Activated CD4-positive, alpha-beta T cell treated with anti-CD3 and anti-CD28 coated beads, Interleukin-2, amount 10 ng/mL, durations not matched to agents 7 days and 5 days (primary cell): ENCODE measurements at regions of chr2 and their contacts with region 1.

Region 1: DNA sequence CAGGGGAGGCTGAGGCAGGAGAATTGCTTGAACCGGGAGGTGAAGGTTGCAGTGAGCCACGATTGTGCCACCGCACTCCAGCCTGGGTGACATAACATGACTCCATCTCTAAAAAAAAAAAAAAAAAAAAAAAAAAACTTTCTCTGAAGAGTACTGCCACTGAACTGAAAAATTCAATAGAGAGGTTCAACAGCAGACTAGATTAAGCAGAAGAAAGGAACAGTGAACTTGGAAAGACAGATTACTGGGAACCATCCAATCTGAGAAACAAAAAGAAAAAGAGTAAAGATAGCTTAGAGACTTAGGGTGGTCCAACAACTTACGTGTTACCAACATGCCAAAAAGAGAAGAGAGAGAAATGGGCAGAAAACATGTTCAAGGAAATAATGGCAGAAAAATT is 138.8 kb downstream of the EML6 start:
- DNase-seq: no peak
- H3K4me3 Mint-ChIP-seq: no peak overlapping the region
- H3K27ac Mint-ChIP-seq: no peak overlapping the region
- H3K4me1 Mint-ChIP-seq: peaks cover 7% of the 10 kb centered on the region
- H3K27me3 Mint-ChIP-seq: no peaks in the 10 kb centered on the region

Region 2: DNA sequence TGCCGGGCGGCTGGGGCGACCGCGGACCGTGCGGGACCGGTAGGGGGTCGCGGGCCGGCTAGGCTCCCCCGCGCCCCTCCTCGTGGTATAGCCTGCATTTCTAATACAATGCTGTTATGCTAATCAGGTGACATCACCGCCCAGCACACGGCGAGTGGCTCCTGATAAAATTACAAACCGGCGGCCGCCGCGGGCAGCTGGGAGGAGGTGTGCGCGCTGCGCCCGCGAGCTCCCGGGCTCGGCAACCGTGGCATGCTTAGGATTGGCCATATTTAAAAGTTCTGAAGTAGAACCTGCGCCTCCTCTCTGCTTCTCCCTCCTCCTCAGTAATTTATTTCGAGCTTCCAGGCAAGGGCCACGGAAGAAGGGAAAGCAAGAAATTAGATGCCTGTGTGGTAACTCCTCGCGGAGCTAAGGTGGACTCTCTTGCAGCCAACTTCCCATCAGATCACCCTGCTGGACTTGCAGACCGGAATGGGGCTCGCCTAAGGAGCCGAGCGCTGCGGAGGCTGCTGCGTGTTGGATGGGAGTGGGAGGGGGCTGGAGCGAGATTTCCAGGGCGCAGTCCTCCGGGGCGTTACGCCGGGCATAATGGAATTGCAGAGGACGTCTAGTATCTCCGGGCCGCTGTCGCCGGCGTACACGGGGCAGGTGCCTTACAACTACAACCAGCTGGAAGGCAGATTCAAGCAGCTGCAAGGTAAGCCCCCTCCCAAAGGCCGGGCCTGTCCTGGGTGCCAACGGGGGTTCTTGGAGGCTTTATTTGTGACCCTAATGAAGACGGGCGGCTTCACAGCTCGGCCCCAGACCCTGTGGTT is 303.8 kb before region 1 on chr2:
- CTCF ChIA-PET with region 1: no interaction called
- POLR2A ChIA-PET with region 1: no interaction called
- DNase-seq: peak; percentile 77
- H3K4me3 Mint-ChIP-seq: peak overlapping the region; percentile 98
- H3K27ac Mint-ChIP-seq: peak overlapping the region; percentile 92
- H3K4me1 Mint-ChIP-seq: peaks cover 40% of the 10 kb centered on the region
- H3K27me3 Mint-ChIP-seq: peaks cover 2% of the 10 kb centered on the region

Region 3: GRCh38 chr2:54803783-54804751 is 58.2 kb before region 1 on chr2:
- CTCF ChIA-PET with region 1: no interaction called
- POLR2A ChIA-PET with region 1: interaction called, 12 read pairs
- DNase-seq: no peak
- H3K4me3 Mint-ChIP-seq: no peak overlapping the region
- H3K27ac Mint-ChIP-seq: no peak overlapping the region
- H3K4me1 Mint-ChIP-seq: peaks cover 3% of the 10 kb centered on the region
- H3K27me3 Mint-ChIP-seq: peaks cover 4% of the 10 kb centered on the region